Caco-2 (cell line): ENCODE measurements at regions of chr6 and their contacts with region 1.

Region 1: DNA sequence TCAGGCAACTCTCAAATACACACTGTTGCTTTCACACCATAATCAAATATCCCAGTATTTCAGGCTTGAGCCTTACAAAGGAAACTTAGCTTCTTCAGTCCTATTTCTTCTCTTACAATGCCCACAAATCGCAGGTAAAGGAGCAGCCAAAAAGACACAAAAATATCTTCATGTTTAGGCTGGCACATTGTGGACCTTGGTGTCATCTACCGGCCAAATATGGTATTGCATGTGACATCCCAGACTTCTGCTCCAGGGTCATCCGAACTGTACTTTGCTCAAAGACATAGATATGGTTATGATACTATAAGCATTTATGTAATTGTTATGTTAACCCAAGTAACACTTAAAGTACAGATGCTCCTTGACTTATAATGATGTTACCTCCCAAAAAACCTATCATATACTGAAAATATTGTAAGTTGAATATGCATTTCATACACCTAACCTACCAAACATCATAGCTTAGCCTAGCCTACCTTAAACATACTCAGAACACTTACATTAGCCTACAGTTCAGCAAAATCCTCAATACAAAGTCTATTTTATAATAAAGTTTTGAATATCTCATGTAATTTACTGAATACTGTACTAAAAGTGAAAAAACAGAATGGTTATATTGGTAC is 4.6 kb downstream of the OR2H2 start:
- DNase-seq: peak in 1 of 2 experiments; percentile 62
- H3K4me3 ChIP-seq: no peak overlapping the region
- H3K4me3 Mint-ChIP-seq: no peak overlapping the region
- H3K27ac Mint-ChIP-seq: no peak overlapping the region
- H3K4me1 ChIP-seq: no peaks in the 10 kb centered on the region
- H3K4me1 Mint-ChIP-seq: no peaks in the 10 kb centered on the region
- H3K27me3 ChIP-seq: no peaks in the 10 kb centered on the region
- H3K27me3 Mint-ChIP-seq: peaks cover 20% of the 10 kb centered on the region
- CTCF ChIP-seq: peak; percentile 83 to 88

Region 2: GRCh38 chr6:29414588-29414987 is 174.9 kb before region 1 on chr6 and contains the start of gene OR12D1:
- CTCF ChIA-PET with region 1: no interaction called
- POLR2A ChIA-PET with region 1: no interaction called
- intact Hi-C with region 1: loop called (anchors 2 kb)
- DNase-seq: peak in 1 of 2 experiments; percentile 4
- H3K4me3 ChIP-seq: no peak within 1 kb of the TSS
- H3K4me3 Mint-ChIP-seq: no peak within 1 kb of the TSS
- H3K27ac Mint-ChIP-seq: no peak within 1 kb of the TSS
- H3K4me1 ChIP-seq: no peaks in the 10 kb centered on the region
- H3K4me1 Mint-ChIP-seq: no peaks in the 10 kb centered on the region
- H3K27me3 ChIP-seq: no peaks in the 10 kb centered on the region
- H3K27me3 Mint-ChIP-seq: peaks cover 11% of the 10 kb centered on the region
- CTCF ChIP-seq: peak in 1 of 2 experiments; percentile 37
- total RNA-seq, gene OR12D1: not detected in 2 replicates

Region 3: DNA sequence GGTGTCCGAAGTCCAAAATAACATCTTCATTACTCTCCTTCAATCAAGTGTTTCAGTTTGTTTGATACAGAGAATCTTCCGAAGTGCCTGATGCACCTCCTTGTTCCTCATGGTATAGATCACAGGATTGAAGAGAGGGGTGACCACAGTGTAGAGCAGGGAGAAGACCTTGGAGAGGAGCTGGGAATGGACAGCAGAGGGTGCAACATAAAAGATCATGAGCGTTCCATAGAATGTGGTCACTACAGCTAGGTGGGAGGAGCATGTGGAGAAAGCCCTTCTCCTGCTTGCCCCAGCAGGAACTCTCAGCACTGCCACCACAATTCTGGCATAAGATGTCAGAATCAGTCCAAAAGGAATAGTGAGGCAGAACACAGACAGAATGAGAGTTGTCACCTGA is 162.9 kb before region 1 on chr6:
- CTCF ChIA-PET with region 1: interaction called, 7 read pairs
- POLR2A ChIA-PET with region 1: no interaction called
- intact Hi-C with region 1: loop called (anchors 1 kb)
- DNase-seq: peak in 1 of 2 experiments; percentile 11
- H3K4me3 ChIP-seq: no peak overlapping the region
- H3K4me3 Mint-ChIP-seq: no peak overlapping the region
- H3K27ac Mint-ChIP-seq: no peak overlapping the region
- H3K4me1 ChIP-seq: no peaks in the 10 kb centered on the region
- H3K4me1 Mint-ChIP-seq: no peaks in the 10 kb centered on the region
- H3K27me3 ChIP-seq: no peaks in the 10 kb centered on the region
- H3K27me3 Mint-ChIP-seq: peaks cover 25% of the 10 kb centered on the region
- CTCF ChIP-seq: peak in 1 of 2 experiments; percentile 15